GM12878 (cell line): ENCODE measurements at regions of chr1 and their contacts with region 1.

Region 1: DNA sequence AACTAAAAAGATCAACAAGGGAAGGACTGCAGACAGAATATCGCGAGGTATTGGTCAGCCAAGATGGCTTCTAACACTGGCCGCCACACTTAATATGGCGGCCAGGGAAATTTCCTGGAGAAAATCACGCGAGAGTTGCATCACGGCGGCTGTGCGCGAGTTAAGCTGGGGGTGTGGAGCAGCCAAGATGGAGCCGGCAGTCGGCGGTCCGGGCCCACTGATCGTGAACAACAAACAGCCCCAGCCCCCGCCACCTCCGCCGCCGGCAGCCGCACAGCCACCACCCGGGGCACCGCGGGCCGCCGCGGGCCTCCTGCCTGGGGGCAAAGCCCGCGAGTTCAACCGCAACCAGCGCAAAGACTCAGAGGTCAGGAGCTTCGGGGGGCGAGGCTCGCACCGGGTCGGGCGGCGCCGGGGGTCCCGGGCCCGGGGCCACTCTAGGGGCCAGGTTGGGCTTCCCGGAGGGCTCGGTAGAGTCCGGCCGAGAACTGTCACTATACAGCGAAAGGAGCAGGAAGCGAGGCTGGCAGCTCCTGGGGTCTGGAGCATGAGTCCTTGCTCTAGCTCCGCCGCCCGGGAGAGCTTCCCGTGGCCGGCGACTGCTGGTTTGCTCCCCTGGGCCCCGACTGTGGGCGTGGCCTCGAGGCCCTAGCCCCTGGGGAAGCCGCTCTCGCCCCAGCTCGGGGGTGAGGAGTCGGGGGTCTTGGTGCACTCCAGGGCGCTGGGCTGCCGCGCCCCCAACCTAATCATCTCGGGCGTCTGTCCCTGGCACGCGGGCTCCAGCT is at the start of gene STRIP1:
- DNase-seq: peak; percentile 93
- ATAC-seq: peak; percentile 96
- H3K4me3 ChIP-seq: peak within 1 kb of the TSS; percentile 90
- H3K27ac ChIP-seq: peak within 1 kb of the TSS; percentile 84
- H3K4me1 ChIP-seq: peaks cover 19% of the 10 kb centered on the region
- H3K27me3 ChIP-seq: no peaks in the 10 kb centered on the region
- CTCF ChIP-seq: no peak
- EP300 ChIP-seq: no peak
- POLR2A ChIP-seq: peak; percentile 86
- RAD21 ChIP-seq: no peak
- polyA plus RNA-seq, gene STRIP1: 6.3 to 7.9 TPM

Region 2: DNA sequence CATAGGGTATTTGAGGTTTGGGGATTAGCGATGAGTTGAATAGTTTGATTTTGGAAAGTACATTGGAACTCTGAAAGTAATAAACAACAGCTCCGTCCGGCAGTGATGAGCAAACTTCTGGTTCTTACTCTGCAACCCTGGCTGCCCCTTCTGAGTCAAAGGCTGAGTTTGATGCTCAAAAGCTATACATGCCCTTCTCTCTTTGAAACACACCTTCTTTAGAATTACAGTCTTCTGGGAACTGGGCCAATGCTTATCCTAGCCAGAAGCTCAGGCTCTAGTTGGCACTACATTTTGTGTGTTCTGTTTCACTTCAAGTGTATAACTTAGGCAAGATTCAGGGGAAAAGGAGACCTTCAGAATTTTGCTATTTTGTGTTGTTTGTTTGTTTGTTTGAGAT is 40.8 kb before region 1 on chr1:
- CTCF ChIA-PET with region 1: interaction called, 10 read pairs
- POLR2A ChIA-PET with region 1: interaction called, 9 read pairs
- RAD21 ChIA-PET with region 1: interaction called, 3 read pairs
- SMC1A ChIA-PET with region 1: interaction called, 4 read pairs
- in situ Hi-C with region 1: no loop called
- intact Hi-C with region 1: no loop called
- DNase-seq: no peak
- ATAC-seq: no peak
- H3K4me3 ChIP-seq: no peak overlapping the region
- H3K27ac ChIP-seq: no peak overlapping the region
- H3K4me1 ChIP-seq: no peaks in the 10 kb centered on the region
- H3K27me3 ChIP-seq: no peaks in the 10 kb centered on the region
- CTCF ChIP-seq: no peak
- EP300 ChIP-seq: no peak
- POLR2A ChIP-seq: no peak
- RAD21 ChIP-seq: no peak

Region 3: GRCh38 chr1:110011527-110012041 is 23.1 kb before region 1 on chr1:
- CTCF ChIA-PET with region 1: interaction called, 57 read pairs
- POLR2A ChIA-PET with region 1: interaction called, 4 read pairs
- RAD21 ChIA-PET with region 1: interaction called, 10 read pairs
- SMC1A ChIA-PET with region 1: interaction called, 12 read pairs
- in situ Hi-C with region 1: no loop called
- intact Hi-C with region 1: loop called (anchors 1 kb)
- DNase-seq: peak; percentile 84
- ATAC-seq: peak; percentile 99
- H3K4me3 ChIP-seq: no peak overlapping the region
- H3K27ac ChIP-seq: peak overlapping the region; percentile 34
- H3K4me1 ChIP-seq: peaks cover 27% of the 10 kb centered on the region
- H3K27me3 ChIP-seq: no peaks in the 10 kb centered on the region
- CTCF ChIP-seq: peak; percentile 68 to 89 (median 74)
- EP300 ChIP-seq: no peak
- POLR2A ChIP-seq: no peak
- RAD21 ChIP-seq: peak; percentile 75

Region 4: GRCh38 chr1:110053557-110054428 is 19.1 kb after region 1 on chr1:
- CTCF ChIA-PET with region 1: interaction called, 57 read pairs
- POLR2A ChIA-PET with region 1: interaction called, 3 read pairs
- RAD21 ChIA-PET with region 1: interaction called, 3 read pairs
- SMC1A ChIA-PET with region 1: interaction called, 4 read pairs
- in situ Hi-C with region 1: no loop called
- intact Hi-C with region 1: no loop called
- DNase-seq: no peak
- ATAC-seq: peak; percentile 95
- H3K4me3 ChIP-seq: no peak overlapping the region
- H3K27ac ChIP-seq: no peak overlapping the region
- H3K4me1 ChIP-seq: no peaks in the 10 kb centered on the region
- H3K27me3 ChIP-seq: no peaks in the 10 kb centered on the region
- CTCF ChIP-seq: peak; percentile 95 to 97 (median 96); a peak in 5 of 6 replicates
- EP300 ChIP-seq: no peak
- POLR2A ChIP-seq: peak; percentile 37; the same call in 1 of the 2 replicates
- RAD21 ChIP-seq: peak; percentile 77

Region 5: GRCh38 chr1:110106013-110106941 is 71.6 kb after region 1 on chr1:
- CTCF ChIA-PET with region 1: interaction called, 33 read pairs
- POLR2A ChIA-PET with region 1: interaction called, 3 read pairs
- RAD21 ChIA-PET with region 1: interaction called, 6 read pairs
- SMC1A ChIA-PET with region 1: interaction called, 11 read pairs
- in situ Hi-C with region 1: no loop called
- intact Hi-C with region 1: loop called (anchors 2 kb)
- DNase-seq: peak; percentile 23
- ATAC-seq: peak; percentile 97
- H3K4me3 ChIP-seq: no peak overlapping the region
- H3K27ac ChIP-seq: no peak overlapping the region
- H3K4me1 ChIP-seq: peaks cover 15% of the 10 kb centered on the region
- H3K27me3 ChIP-seq: no peaks in the 10 kb centered on the region
- CTCF ChIP-seq: peak; percentile 93 to 95 (median 93); a peak in 5 of 6 replicates
- EP300 ChIP-seq: no peak
- POLR2A ChIP-seq: no peak
- RAD21 ChIP-seq: peak; percentile 85